Naive thymus-derived CD4-positive, alpha-beta T cell (primary cell): ENCODE measurements at regions of chr15 and their contacts with region 1.

Region 1: GRCh38 chr15:44593042-44593736 is 56.2 kb downstream of the EIF3J start:
- DNase-seq: peak in 7 of 9 donors; percentile 19 to 63 (median 57)
- ATAC-seq: peak; percentile 83
- H3K4me3 ChIP-seq: no peak overlapping the region
- H3K4me3 Mint-ChIP-seq: no peak overlapping the region
- H3K27ac ChIP-seq: no peak overlapping the region
- H3K27ac Mint-ChIP-seq: peak overlapping the region in 8 of 9 donors; percentile 19 to 92 (median 52)
- H3K4me1 ChIP-seq: peaks cover 0 to 1% of the 10 kb centered on the region in 2 donors
- H3K4me1 Mint-ChIP-seq: peaks cover 3 to 19% (median 12%) of the 10 kb centered on the region in 7 donors
- H3K27me3 ChIP-seq: no peaks in the 10 kb centered on the region
- H3K27me3 Mint-ChIP-seq: no peaks in the 10 kb centered on the region

Region 2: DNA sequence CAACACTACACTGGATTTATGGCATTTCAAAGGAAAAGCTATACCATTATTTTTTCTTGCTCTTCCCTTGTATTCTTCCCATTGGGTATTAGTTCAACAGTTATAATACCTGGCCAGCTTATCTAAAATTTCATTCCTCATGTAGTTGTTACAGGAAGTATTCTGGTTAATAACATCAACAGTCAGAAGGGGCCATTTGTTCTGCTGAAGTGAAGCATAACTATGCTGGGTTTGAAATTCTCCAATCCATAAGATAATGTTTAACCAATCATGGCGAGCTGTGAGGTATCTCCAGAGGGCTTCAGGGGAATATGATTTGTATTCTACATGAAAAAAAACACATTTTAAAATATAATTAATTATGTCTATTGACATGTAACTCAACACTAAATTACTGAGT is 26.9 kb after region 1 on chr15:
- CTCF ChIA-PET with region 1: no interaction called
- POLR2A ChIA-PET with region 1: interaction called, 8 read pairs
- intact Hi-C with region 1: loop called in 1 of 2 experiments (anchors 2 kb)
- DNase-seq: no peak
- ATAC-seq: no peak
- H3K4me3 ChIP-seq: no peak overlapping the region
- H3K4me3 Mint-ChIP-seq: no peak overlapping the region
- H3K27ac ChIP-seq: no peak overlapping the region
- H3K27ac Mint-ChIP-seq: no peak overlapping the region
- H3K4me1 ChIP-seq: no peaks in the 10 kb centered on the region
- H3K4me1 Mint-ChIP-seq: peaks cover 0 to 6% (median 0%) of the 10 kb centered on the region in 7 donors
- H3K27me3 ChIP-seq: no peaks in the 10 kb centered on the region
- H3K27me3 Mint-ChIP-seq: no peaks in the 10 kb centered on the region

Region 3: GRCh38 chr15:44918136-44918535 is 324.9 kb after region 1 on chr15:
- CTCF ChIA-PET with region 1: no interaction called
- POLR2A ChIA-PET with region 1: no interaction called
- intact Hi-C with region 1: loop called (anchors 2 to 10 kb)
- DNase-seq: no peak
- ATAC-seq: no peak
- H3K4me3 ChIP-seq: no peak overlapping the region
- H3K4me3 Mint-ChIP-seq: no peak overlapping the region
- H3K27ac ChIP-seq: no peak overlapping the region
- H3K27ac Mint-ChIP-seq: no peak overlapping the region
- H3K4me1 ChIP-seq: no peaks in the 10 kb centered on the region
- H3K4me1 Mint-ChIP-seq: no peaks in the 10 kb centered on the region
- H3K27me3 ChIP-seq: no peaks in the 10 kb centered on the region
- H3K27me3 Mint-ChIP-seq: peaks cover 0 to 9% (median 0%) of the 10 kb centered on the region in 5 donors